A673 (cell line): ENCODE measurements at regions of chr7 and their contacts with region 1.

Region 1: DNA sequence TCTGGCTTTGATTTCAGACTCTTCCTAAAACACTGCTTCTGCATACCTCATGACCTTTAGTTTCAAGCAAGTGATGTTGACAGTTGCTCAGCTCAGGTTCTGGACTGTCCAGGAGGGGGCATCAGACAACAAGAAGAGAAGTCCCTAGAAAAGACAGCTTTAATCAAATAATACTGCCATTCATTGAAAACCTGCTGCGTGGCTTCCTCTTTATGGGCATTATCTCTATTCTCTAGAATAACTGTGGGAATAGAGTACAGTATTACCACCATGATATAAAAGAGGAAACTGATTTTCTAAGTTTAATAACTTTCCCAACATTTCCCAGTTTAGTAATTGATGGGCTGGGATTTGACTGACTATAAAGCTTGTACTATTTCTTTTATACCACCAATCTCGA is 170.4 kb downstream of the SNX13 start:
- DNase-seq: peak; percentile 79
- H3K4me3 ChIP-seq: no peak overlapping the region
- H3K27ac ChIP-seq: no peak overlapping the region
- H3K4me1 ChIP-seq: no peaks in the 10 kb centered on the region
- H3K27me3 ChIP-seq: no peaks in the 10 kb centered on the region
- CTCF ChIP-seq: peak; percentile 87

Region 2: DNA sequence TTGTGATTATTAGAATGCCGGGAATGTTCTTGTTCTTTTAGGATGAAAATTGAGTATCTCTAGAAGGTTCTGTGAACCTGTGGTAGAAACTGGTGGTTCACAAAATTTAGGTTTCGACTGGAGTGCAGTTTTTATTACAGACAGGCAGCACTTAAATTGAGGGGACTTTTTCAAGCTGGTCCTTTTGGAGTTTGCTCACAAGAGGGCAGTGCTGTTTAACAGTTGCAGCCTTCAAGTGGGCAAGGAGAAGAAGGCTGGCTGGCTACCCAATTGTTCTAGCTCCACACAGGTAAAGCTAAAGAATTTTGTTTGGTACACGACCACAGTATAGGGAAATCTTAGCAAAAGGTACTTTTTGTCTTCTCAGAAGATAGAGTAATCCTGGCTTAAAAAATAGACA is 63.2 kb before region 1 on chr7:
- CTCF ChIA-PET with region 1: interaction called, 3 read pairs
- POLR2A ChIA-PET with region 1: no interaction called
- intact Hi-C with region 1: loop called (anchors 2 kb)
- DNase-seq: peak; percentile 78
- H3K4me3 ChIP-seq: no peak overlapping the region
- H3K27ac ChIP-seq: no peak overlapping the region
- H3K4me1 ChIP-seq: no peaks in the 10 kb centered on the region
- H3K27me3 ChIP-seq: peaks cover 12% of the 10 kb centered on the region
- CTCF ChIP-seq: peak; percentile 77

Region 3: GRCh38 chr7:17965603-17966002 is 195.7 kb after region 1 on chr7:
- CTCF ChIA-PET with region 1: no interaction called
- POLR2A ChIA-PET with region 1: no interaction called
- intact Hi-C with region 1: loop called (anchors 5 kb)
- DNase-seq: no peak
- H3K4me3 ChIP-seq: no peak overlapping the region
- H3K27ac ChIP-seq: no peak overlapping the region
- H3K4me1 ChIP-seq: no peaks in the 10 kb centered on the region
- H3K27me3 ChIP-seq: no peaks in the 10 kb centered on the region
- CTCF ChIP-seq: no peak

Region 4: DNA sequence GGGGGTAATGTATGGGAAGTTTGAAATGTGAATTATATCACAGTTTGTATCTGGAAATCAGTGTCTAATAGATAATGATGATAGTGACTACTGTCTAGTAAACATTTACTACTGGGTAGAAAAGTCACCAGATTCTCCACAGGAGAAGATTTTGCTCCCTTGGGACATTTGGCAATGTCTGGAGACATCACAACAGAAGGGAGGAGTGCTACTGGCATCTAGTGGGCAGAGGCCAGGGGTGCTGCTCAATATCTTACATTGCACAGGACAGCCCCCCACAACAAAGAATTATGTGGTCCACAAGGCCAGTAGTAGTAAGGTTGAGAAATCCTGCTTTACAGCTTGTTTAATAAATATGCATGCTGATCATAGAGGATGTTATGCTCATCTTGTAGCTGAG is 350.1 kb after region 1 on chr7:
- CTCF ChIA-PET with region 1: interaction called, 4 read pairs
- POLR2A ChIA-PET with region 1: no interaction called
- intact Hi-C with region 1: loop called (anchors 5 kb)
- DNase-seq: peak; percentile 70
- H3K4me3 ChIP-seq: no peak overlapping the region
- H3K27ac ChIP-seq: no peak overlapping the region
- H3K4me1 ChIP-seq: no peaks in the 10 kb centered on the region
- H3K27me3 ChIP-seq: no peaks in the 10 kb centered on the region
- CTCF ChIP-seq: peak; percentile 54

Region 5: GRCh38 chr7:18320971-18321567 is 551.2 kb after region 1 on chr7:
- CTCF ChIA-PET with region 1: interaction called, 8 read pairs
- POLR2A ChIA-PET with region 1: no interaction called
- intact Hi-C with region 1: loop called (anchors 5 kb)
- DNase-seq: peak; percentile 66
- H3K4me3 ChIP-seq: no peak overlapping the region
- H3K27ac ChIP-seq: no peak overlapping the region
- H3K4me1 ChIP-seq: no peaks in the 10 kb centered on the region
- H3K27me3 ChIP-seq: no peaks in the 10 kb centered on the region
- CTCF ChIP-seq: peak; percentile 67